Activated CD4-positive, alpha-beta T cell treated with anti-CD3 and anti-CD28 coated beads for 36 hours (primary cell): ENCODE measurements at regions of chr3 and their contacts with region 1.

Region 1: DNA sequence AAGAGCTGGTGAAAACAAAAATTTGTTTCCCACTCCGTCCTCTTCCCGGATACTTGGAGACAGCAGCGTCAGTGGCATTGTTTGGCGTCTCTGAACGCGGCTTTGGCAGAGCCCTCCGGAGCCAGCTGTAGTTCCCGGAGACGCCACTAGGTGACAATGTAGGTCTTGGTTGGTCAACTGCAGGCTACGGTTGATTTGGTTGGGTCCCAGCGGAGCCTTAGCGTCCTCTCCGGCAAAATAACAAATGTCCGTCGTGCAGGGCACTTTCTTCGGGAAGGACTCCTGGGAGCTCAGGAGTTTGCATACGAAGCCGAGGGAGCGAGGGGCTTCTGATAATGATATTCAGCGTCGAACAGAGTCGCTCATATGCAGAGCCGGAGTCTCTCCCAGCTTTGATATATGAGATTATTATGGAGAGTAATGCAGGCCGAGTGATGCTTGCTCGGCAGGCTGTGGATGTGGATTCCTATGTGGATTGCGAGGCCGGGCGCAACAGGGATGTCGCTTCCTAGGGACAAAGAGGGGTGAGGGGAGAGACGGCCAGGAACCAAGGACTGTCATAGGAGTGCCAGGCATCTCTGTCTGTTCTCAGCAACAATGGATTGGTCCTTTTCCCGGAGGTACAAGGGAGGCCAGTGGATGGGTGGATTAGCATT is 74.8 kb downstream of the IL20RB start:
- DNase-seq: peak; percentile 92
- ATAC-seq: peak; percentile 93
- H3K4me3 Mint-ChIP-seq: peak overlapping the region; percentile 54
- H3K27ac Mint-ChIP-seq: no peak overlapping the region
- H3K4me1 Mint-ChIP-seq: peaks cover 7% of the 10 kb centered on the region
- H3K27me3 Mint-ChIP-seq: peaks cover 22% of the 10 kb centered on the region

Region 2: GRCh38 chr3:137020315-137020714 is 12.3 kb before region 1 on chr3:
- CTCF ChIA-PET with region 1: interaction called, 22 read pairs
- POLR2A ChIA-PET with region 1: interaction called, 5 read pairs
- intact Hi-C with region 1: no loop called
- DNase-seq: no peak
- ATAC-seq: no peak
- H3K4me3 Mint-ChIP-seq: no peak overlapping the region
- H3K27ac Mint-ChIP-seq: no peak overlapping the region
- H3K4me1 Mint-ChIP-seq: no peaks in the 10 kb centered on the region
- H3K27me3 Mint-ChIP-seq: no peaks in the 10 kb centered on the region

Region 3: DNA sequence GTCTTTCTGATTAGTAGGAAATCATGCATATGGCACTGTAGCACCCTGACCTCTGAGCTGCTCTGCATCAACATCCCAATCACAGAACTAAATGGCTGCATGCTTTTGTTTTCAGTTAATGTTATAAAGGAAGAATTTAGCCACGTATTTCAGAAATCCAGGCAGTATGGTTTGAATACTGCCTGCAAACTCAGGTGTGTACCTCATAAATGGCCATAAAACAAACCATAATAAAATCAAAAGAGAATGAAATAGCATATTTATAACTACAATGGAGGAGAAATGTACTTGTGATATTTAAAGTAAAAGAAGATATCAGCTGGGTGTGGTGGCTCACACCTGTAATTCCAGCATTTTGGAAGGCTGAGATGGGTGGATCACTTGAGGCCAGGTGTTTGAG is 19.7 kb after region 1 on chr3:
- CTCF ChIA-PET with region 1: interaction called, 16 read pairs
- POLR2A ChIA-PET with region 1: no interaction called
- intact Hi-C with region 1: no loop called
- DNase-seq: no peak
- ATAC-seq: no peak
- H3K4me3 Mint-ChIP-seq: no peak overlapping the region
- H3K27ac Mint-ChIP-seq: no peak overlapping the region
- H3K4me1 Mint-ChIP-seq: no peaks in the 10 kb centered on the region
- H3K27me3 Mint-ChIP-seq: peaks cover 7% of the 10 kb centered on the region

Region 4: DNA sequence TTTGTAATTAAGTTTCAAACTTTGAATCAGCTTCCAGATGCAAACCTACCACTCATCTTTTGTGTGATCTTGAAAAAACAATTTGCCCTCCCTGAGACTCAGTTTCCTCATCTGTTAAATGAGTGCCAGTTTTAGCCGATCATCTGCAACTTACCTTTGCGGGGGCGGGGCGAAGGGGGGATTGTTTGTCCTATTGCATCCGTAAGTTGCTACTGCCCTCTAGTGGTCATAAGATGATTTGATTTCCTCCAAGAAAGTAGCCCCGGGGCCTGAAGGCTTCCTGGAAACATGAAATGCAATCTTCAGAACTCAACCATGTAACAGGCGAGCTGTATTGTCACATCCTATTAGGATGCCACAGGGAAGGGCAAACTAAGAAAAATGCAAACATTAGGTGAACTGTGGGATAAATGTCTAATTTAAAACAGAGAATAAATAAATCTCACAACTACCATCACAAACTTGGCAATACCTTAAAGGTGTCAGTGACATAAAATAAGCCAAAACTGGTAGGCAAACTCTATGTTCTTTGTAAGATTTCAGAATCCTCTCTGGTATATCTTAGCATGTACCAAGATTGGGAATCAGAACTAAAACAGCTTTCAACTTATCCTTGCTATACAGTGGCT is 913.9 kb after region 1 on chr3:
- CTCF ChIA-PET with region 1: interaction called, 6 read pairs
- POLR2A ChIA-PET with region 1: no interaction called
- intact Hi-C with region 1: loop called (anchors 1 to 5 kb)
- DNase-seq: peak; percentile 71
- ATAC-seq: peak; percentile 47
- H3K4me3 Mint-ChIP-seq: no peak overlapping the region
- H3K27ac Mint-ChIP-seq: no peak overlapping the region
- H3K4me1 Mint-ChIP-seq: peaks cover 5% of the 10 kb centered on the region
- H3K27me3 Mint-ChIP-seq: no peaks in the 10 kb centered on the region

Region 5: GRCh38 chr3:137970914-137971831 is 938.6 kb after region 1 on chr3:
- CTCF ChIA-PET with region 1: interaction called, 3 read pairs
- POLR2A ChIA-PET with region 1: no interaction called
- intact Hi-C with region 1: loop called in 1 of 2 experiments (anchors 1 kb)
- DNase-seq: peak; percentile 83
- ATAC-seq: peak; percentile 49
- H3K4me3 Mint-ChIP-seq: no peak overlapping the region
- H3K27ac Mint-ChIP-seq: no peak overlapping the region
- H3K4me1 Mint-ChIP-seq: no peaks in the 10 kb centered on the region
- H3K27me3 Mint-ChIP-seq: peaks cover 13% of the 10 kb centered on the region